Activated CD8-positive, alpha-beta T cell treated with anti-CD3 and anti-CD28 coated beads for 36 hours (primary cell): ENCODE measurements at regions of chr11 and their contacts with region 1.

Region 1: GRCh38 chr11:102346748-102347461 is at the start of gene BIRC2:
- DNase-seq: peak; percentile 95
- ATAC-seq: peak; percentile 94
- H3K4me3 Mint-ChIP-seq: peak within 1 kb of the TSS; percentile 90
- H3K27ac Mint-ChIP-seq: peak within 1 kb of the TSS; percentile 95
- H3K4me1 Mint-ChIP-seq: peaks cover 36% of the 10 kb centered on the region
- H3K27me3 Mint-ChIP-seq: no peaks in the 10 kb centered on the region
- CTCF ChIP-seq: peak; percentile 69
- total RNA-seq, gene BIRC2: 29.8 to 32.9 TPM

Region 2: DNA sequence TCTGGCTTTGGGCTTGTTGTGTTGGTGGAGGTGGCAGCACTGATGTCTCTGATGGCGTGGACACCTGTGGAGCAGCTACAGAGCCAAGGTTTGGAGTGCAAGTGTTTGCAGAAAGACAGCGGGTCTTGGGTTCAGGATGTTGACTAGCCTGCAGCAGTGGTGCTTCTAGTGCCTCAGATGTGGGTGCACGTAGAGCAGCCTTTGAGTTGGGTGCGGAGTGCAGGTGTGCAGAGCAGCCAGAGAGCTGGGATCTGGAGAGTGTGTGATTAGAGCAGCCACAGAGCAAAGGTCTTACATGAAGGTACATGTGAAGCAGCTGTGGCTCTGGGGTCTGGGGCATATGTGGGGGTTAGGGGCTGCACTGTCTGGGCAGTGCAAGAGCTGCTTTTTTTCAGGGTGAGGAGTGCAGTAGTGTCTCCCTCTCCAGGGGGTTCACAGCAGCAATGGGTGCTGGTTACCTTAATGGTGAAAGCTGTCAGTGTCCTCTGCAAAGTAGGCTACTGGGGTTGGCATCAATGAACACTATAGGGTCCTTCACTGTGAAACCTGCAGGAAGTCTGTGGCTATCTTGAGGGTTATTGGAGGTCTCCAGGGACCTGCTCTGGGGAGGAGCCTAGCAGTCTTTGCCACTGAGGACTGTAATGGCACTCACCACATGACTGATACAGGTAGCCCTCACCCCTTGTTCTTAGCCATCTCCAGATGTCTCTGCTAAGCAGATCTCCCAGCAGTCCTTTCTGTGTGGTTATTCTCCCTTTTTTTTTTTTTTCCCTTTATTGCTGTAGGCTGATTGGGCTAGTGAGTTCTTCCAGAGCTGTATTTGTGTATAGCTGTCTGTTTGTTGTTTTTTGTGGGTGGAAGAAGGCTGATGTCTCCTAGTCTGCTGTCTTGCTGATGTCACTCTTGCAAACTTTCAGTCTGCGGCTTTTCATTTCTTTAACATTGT is 14.5 kb after region 1 on chr11:
- CTCF ChIA-PET with region 1: interaction called, 18 read pairs
- POLR2A ChIA-PET with region 1: interaction called, 9 read pairs
- intact Hi-C with region 1: no loop called
- DNase-seq: peak; percentile 27
- ATAC-seq: peak; percentile 79
- H3K4me3 Mint-ChIP-seq: peak overlapping the region; percentile 18
- H3K27ac Mint-ChIP-seq: peak overlapping the region; percentile 90
- H3K4me1 Mint-ChIP-seq: peaks cover 45% of the 10 kb centered on the region
- H3K27me3 Mint-ChIP-seq: no peaks in the 10 kb centered on the region
- CTCF ChIP-seq: no peak

Region 3: GRCh38 chr11:102367364-102367763 is 20.5 kb after region 1 on chr11:
- CTCF ChIA-PET with region 1: interaction called, 18 read pairs
- POLR2A ChIA-PET with region 1: interaction called, 9 read pairs
- intact Hi-C with region 1: no loop called
- DNase-seq: no peak
- ATAC-seq: peak; percentile 64
- H3K4me3 Mint-ChIP-seq: no peak overlapping the region
- H3K27ac Mint-ChIP-seq: peak overlapping the region; percentile 34
- H3K4me1 Mint-ChIP-seq: peaks cover 30% of the 10 kb centered on the region
- H3K27me3 Mint-ChIP-seq: no peaks in the 10 kb centered on the region
- CTCF ChIP-seq: peak; percentile 56

Region 4: DNA sequence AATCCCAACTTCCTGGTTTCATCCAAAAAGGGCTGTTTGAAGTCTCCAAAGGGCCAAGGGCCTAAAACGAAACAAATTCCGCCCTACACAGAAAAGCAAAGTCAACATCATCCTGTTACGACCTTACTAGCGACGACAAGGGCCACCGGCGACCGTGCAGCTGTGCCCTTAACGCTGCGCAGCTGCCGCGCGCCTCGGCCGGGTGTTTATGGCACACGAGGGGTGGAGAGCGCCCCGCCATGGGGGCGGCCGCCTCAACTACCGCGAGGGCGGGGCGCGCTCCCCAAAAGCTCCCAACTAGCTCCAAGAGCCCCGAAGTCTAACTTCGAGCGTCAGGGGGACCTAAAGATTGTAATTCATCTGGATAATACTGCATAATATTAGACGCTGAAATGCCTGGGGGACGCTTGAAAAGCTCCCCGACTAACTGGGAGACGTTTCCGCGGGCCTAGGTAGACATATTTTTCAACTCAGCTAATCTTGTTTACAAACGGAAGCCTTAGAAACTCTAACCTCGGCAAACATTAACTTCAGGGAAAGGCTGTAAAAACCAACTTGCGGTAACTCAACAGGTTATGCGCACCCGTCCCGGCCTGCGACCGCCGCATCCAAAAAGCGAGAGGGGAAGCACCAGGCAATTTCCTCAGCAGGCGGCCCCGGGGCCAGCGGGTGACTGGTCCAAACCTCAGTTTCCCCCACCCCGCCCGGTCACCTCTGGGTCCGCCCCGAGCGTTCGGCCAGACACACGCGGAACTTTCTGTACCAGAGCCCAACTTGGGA is 105.0 kb after region 1 on chr11:
- CTCF ChIA-PET with region 1: interaction called, 11 read pairs
- POLR2A ChIA-PET with region 1: interaction called, 3 read pairs
- intact Hi-C with region 1: loop called (anchors 5 kb)
- DNase-seq: peak; percentile 88
- ATAC-seq: peak; percentile 64
- H3K4me3 Mint-ChIP-seq: peak overlapping the region; percentile 98
- H3K27ac Mint-ChIP-seq: peak overlapping the region; percentile 96
- H3K4me1 Mint-ChIP-seq: peaks cover 75% of the 10 kb centered on the region
- H3K27me3 Mint-ChIP-seq: no peaks in the 10 kb centered on the region
- CTCF ChIP-seq: peak; percentile 27